ENCODE measurements at regions of chr3 and their contacts with region 1.

Region 1: DNA sequence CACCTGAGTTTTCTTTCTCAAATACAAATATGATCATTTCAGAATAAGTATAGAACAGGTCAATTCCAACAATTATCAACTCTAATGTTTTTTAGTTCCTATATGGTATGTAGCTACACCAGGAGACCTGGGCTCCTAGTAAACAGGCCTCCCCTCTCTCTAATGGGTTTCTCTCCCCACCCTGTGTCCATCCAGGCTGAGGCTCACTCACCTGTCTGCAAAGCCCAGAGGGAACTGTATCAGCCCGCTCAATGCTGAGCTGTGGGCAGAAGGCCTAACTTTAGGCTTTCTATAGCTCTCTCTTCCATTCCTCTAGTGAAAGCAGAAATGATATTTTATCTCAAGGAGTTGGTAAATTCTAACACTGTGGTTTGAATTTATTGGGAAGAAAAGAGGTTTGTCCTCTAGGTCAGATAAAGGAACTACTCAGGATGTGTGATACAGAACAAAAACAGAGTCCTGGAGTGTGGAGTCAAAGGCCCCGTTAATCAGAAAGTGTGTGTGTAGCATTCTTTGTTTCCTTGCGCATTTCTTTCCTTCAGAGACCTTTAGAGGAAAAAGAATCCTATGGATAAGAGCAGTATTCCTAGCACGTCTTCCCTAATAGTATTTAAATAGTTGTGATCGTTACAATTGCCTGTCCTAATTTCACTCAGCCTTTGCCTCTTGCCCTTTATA is 408.9 kb downstream of the PYDC2 start:
- DNase-seq: no peak
- ATAC-seq: no peak
- H3K4me3 ChIP-seq: no peak overlapping the region
- H3K27ac ChIP-seq: no peak overlapping the region
- H3K4me1 ChIP-seq: no peaks in the 10 kb centered on the region
- H3K27me3 ChIP-seq: no peaks in the 10 kb centered on the region
- CTCF ChIP-seq: no peak

Region 2: GRCh38 chr3:191141728-191142127 is 728.1 kb before region 1 on chr3:
- CTCF ChIA-PET with region 1: interaction called, 11 read pairs
- POLR2A ChIA-PET with region 1: no interaction called
- in situ Hi-C with region 1: no loop called
- intact Hi-C with region 1: no loop called
- DNase-seq: peak; percentile 47
- ATAC-seq: peak; percentile 56; the same call in 1 of the 2 replicates
- H3K4me3 ChIP-seq: no peak overlapping the region
- H3K27ac ChIP-seq: no peak overlapping the region
- H3K4me1 ChIP-seq: no peaks in the 10 kb centered on the region
- H3K27me3 ChIP-seq: no peaks in the 10 kb centered on the region
- CTCF ChIP-seq: no peak

Region 3: DNA sequence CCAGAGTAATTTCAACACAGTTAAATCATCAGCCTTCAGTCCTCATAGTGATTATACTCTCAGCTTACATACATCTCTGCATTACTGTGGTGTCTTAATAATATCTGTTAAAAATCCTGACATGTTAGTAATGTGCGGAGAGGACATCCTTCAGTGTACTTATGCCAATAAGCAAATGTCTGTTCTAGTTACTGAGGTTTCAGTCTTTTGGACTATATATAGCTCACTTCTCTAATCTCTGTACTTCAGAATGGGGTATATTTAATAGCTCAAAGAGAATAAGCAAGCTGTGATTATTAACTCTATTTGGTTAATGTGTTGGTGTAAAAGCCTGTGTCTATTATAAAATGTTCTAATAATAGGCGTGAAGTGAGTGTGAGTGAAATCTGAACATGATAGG is 699.8 kb before region 1 on chr3:
- CTCF ChIA-PET with region 1: no interaction called
- POLR2A ChIA-PET with region 1: no interaction called
- in situ Hi-C with region 1: no loop called
- intact Hi-C with region 1: no loop called
- DNase-seq: no peak
- ATAC-seq: no peak
- H3K4me3 ChIP-seq: no peak overlapping the region
- H3K27ac ChIP-seq: no peak overlapping the region
- H3K4me1 ChIP-seq: no peaks in the 10 kb centered on the region
- H3K27me3 ChIP-seq: no peaks in the 10 kb centered on the region
- CTCF ChIP-seq: no peak

Region 4: DNA sequence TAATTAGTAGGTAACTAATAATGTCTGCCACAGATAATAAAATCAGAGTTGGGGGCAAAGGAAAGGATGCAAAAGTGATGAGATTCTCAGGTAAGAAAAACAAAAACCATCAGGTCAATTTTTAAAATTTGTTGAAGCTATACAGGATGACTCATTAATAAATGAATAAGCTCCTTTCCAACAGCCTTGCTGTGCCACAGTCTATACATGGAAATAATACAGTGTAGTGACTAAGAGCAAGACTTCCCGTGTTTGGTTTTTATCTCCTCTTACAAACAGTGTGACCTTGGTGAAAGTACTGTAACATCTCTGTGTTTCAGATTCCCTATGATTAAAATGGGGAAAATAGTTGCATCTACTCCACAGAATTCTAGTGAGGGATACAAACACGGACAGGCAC is 77.3 kb before region 1 on chr3:
- CTCF ChIA-PET with region 1: no interaction called
- POLR2A ChIA-PET with region 1: no interaction called
- in situ Hi-C with region 1: no loop called
- intact Hi-C with region 1: loop called (anchors 5 kb)
- DNase-seq: no peak
- ATAC-seq: no peak
- H3K4me3 ChIP-seq: no peak overlapping the region
- H3K27ac ChIP-seq: no peak overlapping the region
- H3K4me1 ChIP-seq: no peaks in the 10 kb centered on the region
- H3K27me3 ChIP-seq: no peaks in the 10 kb centered on the region
- CTCF ChIP-seq: no peak